Breast epithelium (tissue), 4 donors: ENCODE measurements at regions of chr9 and their contacts with region 1.

Region 1: DNA sequence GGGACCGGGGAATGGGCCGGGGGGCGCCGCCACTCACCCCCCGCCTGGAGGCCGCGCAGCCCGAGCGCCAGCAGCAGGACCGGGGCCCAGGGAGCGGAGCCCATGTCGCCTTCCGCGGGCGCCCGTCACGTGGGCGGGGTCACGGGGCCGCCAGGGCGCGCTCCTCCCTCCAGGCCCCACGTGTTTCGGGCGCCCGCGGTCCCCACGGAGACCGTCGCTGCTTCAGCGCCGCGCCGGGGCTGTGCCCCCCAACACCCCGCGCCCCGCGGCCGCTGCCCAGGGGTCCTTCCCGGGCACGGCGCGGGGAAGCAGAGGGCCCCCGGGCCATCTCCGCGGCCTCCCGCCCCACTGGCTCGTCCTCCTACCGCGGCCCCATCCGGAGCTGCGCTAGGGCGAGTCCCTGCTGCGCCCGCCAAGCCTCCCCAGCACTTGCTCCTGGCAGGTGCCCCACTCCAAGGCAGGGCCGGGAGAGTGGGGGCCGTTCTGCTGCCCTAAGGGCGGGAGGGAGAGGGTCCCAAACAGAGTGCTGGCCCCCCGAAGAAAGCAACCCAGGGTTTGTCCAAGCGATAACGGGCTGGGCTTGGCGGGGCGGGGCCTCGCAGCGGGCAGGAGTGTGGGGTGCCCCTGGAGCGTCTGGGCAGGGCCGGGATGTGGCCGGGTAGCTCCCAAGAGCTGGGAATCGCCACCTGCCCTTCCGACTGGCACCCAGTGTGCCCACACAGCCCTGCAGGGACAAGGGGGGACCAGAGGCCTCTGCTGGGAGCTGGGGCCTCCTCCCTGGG is at the start of gene DPP7:
- DNase-seq: peak in 1 of 2 donors; percentile 42
- H3K4me3 ChIP-seq: peak within 1 kb of the TSS; percentile 78 to 81 (median 80)
- H3K27ac ChIP-seq: no peak within 1 kb of the TSS
- H3K4me1 ChIP-seq: no peaks in the 10 kb centered on the region
- H3K27me3 ChIP-seq: no peaks in the 10 kb centered on the region
- CTCF ChIP-seq: no peak
- POLR2A ChIP-seq: no peak
- total RNA-seq, gene DPP7: 115 to 137 (median 132) TPM

Region 2: GRCh38 chr9:137086531-137087408 is 28.0 kb before region 1 on chr9 and contains the start of gene MAN1B1:
- intact Hi-C with region 1: loop called (anchors 2 kb)
- DNase-seq: peak; percentile 99
- H3K4me3 ChIP-seq: peak within 1 kb of the TSS; percentile 77 to 85 (median 85)
- H3K27ac ChIP-seq: peak within 1 kb of the TSS; percentile 91 to 94
- H3K4me1 ChIP-seq: peaks cover 3 to 14% of the 10 kb centered on the region in 2 donors
- H3K27me3 ChIP-seq: no peaks in the 10 kb centered on the region
- CTCF ChIP-seq: peak in 1 of 3 donors; percentile 3
- POLR2A ChIP-seq: peak; percentile 33
- total RNA-seq, gene MAN1B1: 50.1 to 62.8 (median 50.8) TPM

Region 3: GRCh38 chr9:137186385-137186784 is 71.6 kb after region 1 on chr9:
- intact Hi-C with region 1: loop called (anchors 2 kb)
- DNase-seq: no peak
- H3K4me3 ChIP-seq: peak overlapping the region in 2 of 3 donors; percentile 99 to 100
- H3K27ac ChIP-seq: no peak overlapping the region
- H3K4me1 ChIP-seq: peaks cover 28 to 31% of the 10 kb centered on the region in 2 donors
- H3K27me3 ChIP-seq: no peaks in the 10 kb centered on the region
- CTCF ChIP-seq: no peak
- POLR2A ChIP-seq: no peak

Region 4: GRCh38 chr9:137236238-137236935 is 121.6 kb after region 1 on chr9:
- intact Hi-C with region 1: loop called (anchors 10 kb)
- DNase-seq: peak; percentile 76 to 93
- H3K4me3 ChIP-seq: peak overlapping the region in 2 of 3 donors; percentile 11 to 46
- H3K27ac ChIP-seq: peak overlapping the region; percentile 80
- H3K4me1 ChIP-seq: peaks cover 0 to 21% of the 10 kb centered on the region in 2 donors
- H3K27me3 ChIP-seq: peaks cover 23 to 46% of the 10 kb centered on the region in 2 donors
- CTCF ChIP-seq: peak; percentile 94 to 99 (median 99)
- POLR2A ChIP-seq: no peak

Region 5: GRCh38 chr9:137590462-137591383 is 475.9 kb after region 1 on chr9 and contains the start of gene ZMYND19:
- intact Hi-C with region 1: no loop called
- DNase-seq: peak; percentile 84 to 87
- H3K4me3 ChIP-seq: peak within 1 kb of the TSS; percentile 62 to 94 (median 74)
- H3K27ac ChIP-seq: peak within 1 kb of the TSS; percentile 50 to 83
- H3K4me1 ChIP-seq: peaks cover 6 to 8% of the 10 kb centered on the region in 2 donors
- H3K27me3 ChIP-seq: no peaks in the 10 kb centered on the region
- CTCF ChIP-seq: no peak
- POLR2A ChIP-seq: no peak
- total RNA-seq, gene ZMYND19: 9.4 to 17.7 (median 16.5) TPM